ENCODE measurements at regions of chr1 and their contacts with region 1.

Region 1: GRCh38 chr1:226827968-226828513 is 42.4 kb upstream of the PSEN2 start:
- DNase-seq: peak; percentile 97
- H3K4me3 ChIP-seq: peak overlapping the region; percentile 24 to 31
- H3K27ac ChIP-seq: peak overlapping the region; percentile 73 to 92
- H3K4me1 ChIP-seq: peaks cover 12% of the 10 kb centered on the region
- H3K27me3 ChIP-seq: no peaks in the 10 kb centered on the region
- CTCF ChIP-seq: peak; percentile 86 to 95 (median 88)
- POLR2A ChIP-seq: no peak

Region 2: GRCh38 chr1:226637147-226637935 is 190.7 kb before region 1 on chr1:
- intact Hi-C with region 1: loop called (anchors 5 kb)
- DNase-seq: peak; percentile 78
- H3K4me3 ChIP-seq: no peak overlapping the region
- H3K27ac ChIP-seq: peak overlapping the region; percentile 75 to 85
- H3K4me1 ChIP-seq: peaks cover 38% of the 10 kb centered on the region
- H3K27me3 ChIP-seq: no peaks in the 10 kb centered on the region
- CTCF ChIP-seq: peak; percentile 20 to 47 (median 43)
- POLR2A ChIP-seq: no peak

Region 3: DNA sequence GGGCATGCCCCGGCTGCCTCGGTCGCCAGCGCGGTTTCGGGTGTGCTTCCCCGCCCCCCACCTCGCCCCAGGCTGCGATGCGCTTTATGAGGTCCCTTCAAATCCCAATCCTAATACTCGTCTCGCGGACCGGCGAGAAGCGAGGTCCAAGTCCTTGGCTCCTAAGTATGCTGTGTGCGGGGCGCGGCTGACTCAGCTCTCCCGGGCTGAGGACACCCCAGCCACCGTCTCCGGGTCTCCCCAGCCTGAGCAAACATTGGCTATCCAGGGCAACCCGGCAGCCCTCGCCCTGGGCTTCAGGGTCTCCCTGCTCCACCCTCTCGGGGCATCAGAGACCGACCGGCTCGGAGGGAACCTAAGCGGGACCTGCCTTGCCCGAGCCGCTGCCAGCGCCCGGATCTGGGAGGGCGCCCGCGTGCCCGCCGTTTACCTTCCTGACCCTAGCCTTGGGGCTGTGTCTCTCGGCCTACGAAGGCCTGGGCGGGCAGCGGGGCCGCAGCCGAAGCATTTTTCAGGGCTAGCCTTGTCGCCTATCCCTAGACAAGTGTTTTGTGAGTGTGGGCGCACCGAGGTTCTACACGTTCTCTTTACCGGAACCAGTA is 90.1 kb before region 1 on chr1:
- intact Hi-C with region 1: no loop called
- DNase-seq: peak; percentile 57
- H3K4me3 ChIP-seq: peak overlapping the region; percentile 63 to 80
- H3K27ac ChIP-seq: peak overlapping the region; percentile 80 to 87
- H3K4me1 ChIP-seq: peaks cover 20% of the 10 kb centered on the region
- H3K27me3 ChIP-seq: no peaks in the 10 kb centered on the region
- CTCF ChIP-seq: no peak
- POLR2A ChIP-seq: no peak